SK-N-SH (cell line): ENCODE measurements at regions of chr6 and their contacts with region 1.

Region 1: DNA sequence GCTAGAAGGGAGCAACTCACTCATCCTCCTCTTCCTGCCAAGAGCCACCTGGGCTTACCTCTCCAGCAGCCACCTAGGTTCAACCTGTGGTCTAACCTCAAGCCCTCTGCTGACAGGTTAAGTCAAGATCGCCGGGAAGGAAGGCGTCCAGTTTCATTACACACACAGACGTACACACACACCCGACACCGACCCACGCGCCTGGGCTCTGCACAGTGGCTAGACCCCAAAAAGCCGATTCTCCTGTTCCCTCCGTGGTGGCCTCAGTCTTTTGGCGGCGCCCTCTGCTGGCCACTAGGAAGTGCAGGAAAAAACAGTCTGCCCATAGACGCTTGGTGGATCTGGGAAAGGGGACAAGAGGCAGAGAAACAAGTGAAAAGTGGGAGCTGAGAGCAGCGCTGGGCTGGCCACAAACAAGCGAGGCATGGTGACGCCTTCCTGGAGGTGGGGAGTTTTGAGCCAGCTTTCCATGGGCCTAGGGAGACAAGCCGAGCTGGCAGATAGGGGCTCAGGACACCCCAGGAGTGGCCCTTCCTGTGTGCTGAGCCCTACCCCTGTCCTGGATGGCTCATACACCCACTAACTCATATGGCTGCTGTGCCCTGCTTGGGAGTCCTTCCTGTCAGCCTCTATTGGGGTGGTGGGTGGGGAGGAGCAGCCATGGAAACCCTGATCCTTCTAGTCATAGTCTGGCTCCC is 52.7 kb downstream of the MRPL14 start:
- DNase-seq: peak; percentile 83
- H3K4me3 ChIP-seq: peak overlapping the region in 1 of 2 experiments; percentile 16; a peak in 1 of 4 replicates
- H3K27ac ChIP-seq: peak overlapping the region in 1 of 2 experiments; percentile 99; a peak in 2 of 4 replicates
- H3K4me1 ChIP-seq: peaks cover 35 to 70% of the 10 kb centered on the region in 2 experiments
- H3K27me3 ChIP-seq: no peaks in the 10 kb centered on the region
- CTCF ChIP-seq: peak; percentile 91
- EP300 ChIP-seq: peak in 1 of 2 experiments; percentile 8; a peak in 1 of 4 replicates
- RAD21 ChIP-seq: peak; percentile 88

Region 2: GRCh38 chr6:43608310-43608763 is 466.3 kb before region 1 on chr6:
- CTCF ChIA-PET with region 1: interaction called, 22 read pairs
- POLR2A ChIA-PET with region 1: no interaction called
- DNase-seq: peak; percentile 77
- H3K4me3 ChIP-seq: no peak overlapping the region
- H3K27ac ChIP-seq: no peak overlapping the region
- H3K4me1 ChIP-seq: peaks cover 0 to 10% of the 10 kb centered on the region in 2 experiments; a peak in 2 of 4 replicates
- H3K27me3 ChIP-seq: no peaks in the 10 kb centered on the region
- CTCF ChIP-seq: peak; percentile 88
- EP300 ChIP-seq: no peak
- RAD21 ChIP-seq: peak; percentile 77

Region 3: GRCh38 chr6:43774776-43775534 is 299.6 kb before region 1 on chr6:
- CTCF ChIA-PET with region 1: interaction called, 212 read pairs
- POLR2A ChIA-PET with region 1: interaction called, 53 read pairs
- DNase-seq: peak; percentile 91
- H3K4me3 ChIP-seq: peak overlapping the region; percentile 94 to 95; a peak in 3 of 4 replicates
- H3K27ac ChIP-seq: peak overlapping the region; percentile 33 to 93; a peak in 2 of 4 replicates
- H3K4me1 ChIP-seq: peaks cover 14 to 64% of the 10 kb centered on the region in 2 experiments
- H3K27me3 ChIP-seq: no peaks in the 10 kb centered on the region
- CTCF ChIP-seq: peak; percentile 81
- EP300 ChIP-seq: no peak
- RAD21 ChIP-seq: peak; percentile 54

Region 4: DNA sequence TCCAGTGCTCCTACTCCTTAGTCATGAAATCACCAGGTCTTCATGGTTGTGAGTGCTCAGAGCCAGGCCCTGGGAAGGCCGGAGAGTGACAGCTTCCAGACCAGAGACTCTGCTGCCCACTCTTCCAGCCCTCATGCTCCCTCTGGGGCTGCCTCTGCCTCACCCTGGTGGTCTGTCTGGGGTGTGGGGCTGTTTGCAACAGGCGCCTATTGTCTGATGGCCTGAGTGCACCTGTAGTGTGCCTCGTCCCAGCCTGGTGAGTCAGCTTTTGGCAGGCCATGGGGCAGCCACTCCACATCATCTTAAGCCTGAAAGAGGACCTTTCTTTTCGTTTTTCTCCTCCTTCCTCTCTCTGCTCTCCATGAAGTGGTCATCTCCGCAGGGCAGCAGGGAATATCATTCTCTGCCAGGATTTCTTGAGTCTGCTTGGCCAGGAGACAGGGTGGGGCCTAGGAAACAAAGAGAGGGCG is 130.8 kb before region 1 on chr6:
- CTCF ChIA-PET with region 1: interaction called, 172 read pairs
- POLR2A ChIA-PET with region 1: interaction called, 6 read pairs
- DNase-seq: no peak
- H3K4me3 ChIP-seq: no peak overlapping the region
- H3K27ac ChIP-seq: peak overlapping the region in 1 of 2 experiments; percentile 100; a peak in 2 of 4 replicates
- H3K4me1 ChIP-seq: peaks cover 0 to 51% of the 10 kb centered on the region in 2 experiments; a peak in 3 of 4 replicates
- H3K27me3 ChIP-seq: no peaks in the 10 kb centered on the region
- CTCF ChIP-seq: no peak
- EP300 ChIP-seq: no peak
- RAD21 ChIP-seq: no peak

Region 5: DNA sequence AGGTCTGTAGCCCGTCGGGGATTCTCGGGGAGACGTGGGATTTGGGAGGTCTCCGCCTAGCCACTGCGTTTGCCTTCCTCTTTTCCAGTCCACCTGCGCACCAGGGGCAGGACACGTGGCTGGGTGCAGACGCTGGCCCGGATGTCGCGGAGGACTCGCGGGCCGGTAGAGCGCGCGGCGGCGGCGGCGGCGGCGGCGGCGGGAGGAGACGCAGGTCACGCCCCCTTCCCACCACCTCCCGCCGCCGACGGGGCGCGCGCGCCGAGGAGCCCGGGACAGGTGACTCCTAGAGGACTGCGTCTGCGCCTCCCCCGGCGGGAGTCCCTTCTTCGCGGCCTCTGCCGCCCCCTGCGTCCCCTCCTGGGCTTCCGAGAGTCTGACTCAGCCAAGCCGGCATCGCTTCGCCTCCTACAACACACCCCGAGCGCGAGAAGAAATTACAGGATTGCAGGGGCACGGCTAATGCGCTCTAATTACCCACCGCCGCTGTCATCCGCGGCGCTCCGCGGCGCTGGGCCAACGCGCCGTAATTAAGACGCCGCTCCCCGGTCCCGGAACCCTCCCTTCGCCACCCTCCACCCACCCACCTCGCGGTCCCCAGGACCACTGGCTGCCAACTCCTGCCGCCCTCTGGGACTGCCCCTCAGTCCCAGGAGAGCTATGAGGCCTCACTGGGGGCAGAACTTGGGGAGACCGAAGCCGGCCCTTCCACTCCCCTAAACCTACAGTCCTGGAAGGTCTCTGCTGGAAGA is 71.8 kb before region 1 on chr6:
- CTCF ChIA-PET with region 1: interaction called, 27 read pairs
- POLR2A ChIA-PET with region 1: no interaction called
- DNase-seq: peak; percentile 72
- H3K4me3 ChIP-seq: no peak overlapping the region
- H3K27ac ChIP-seq: no peak overlapping the region
- H3K4me1 ChIP-seq: peaks cover 11 to 39% of the 10 kb centered on the region in 2 experiments; a peak in 3 of 4 replicates
- H3K27me3 ChIP-seq: no peaks in the 10 kb centered on the region
- CTCF ChIP-seq: no peak
- EP300 ChIP-seq: no peak
- RAD21 ChIP-seq: no peak

Region 6: GRCh38 chr6:44058617-44059358 is 15.8 kb before region 1 on chr6:
- CTCF ChIA-PET with region 1: interaction called, 203 read pairs
- POLR2A ChIA-PET with region 1: interaction called, 60 read pairs
- DNase-seq: peak; percentile 81
- H3K4me3 ChIP-seq: no peak overlapping the region; a peak in 1 of 4 replicates
- H3K27ac ChIP-seq: peak overlapping the region; percentile 92 to 100
- H3K4me1 ChIP-seq: peaks cover 62 to 82% of the 10 kb centered on the region in 2 experiments
- H3K27me3 ChIP-seq: no peaks in the 10 kb centered on the region
- CTCF ChIP-seq: no peak
- EP300 ChIP-seq: peak; percentile 89 to 93
- RAD21 ChIP-seq: peak; percentile 43